Activated CD4-positive, alpha-beta memory T cell treated with anti-CD3 and anti-CD28 coated beads for 36 hours (primary cell): ENCODE measurements at regions of chr2 and their contacts with region 1.

Region 1: GRCh38 chr2:10832203-10832936 is 19.8 kb upstream of the PDIA6 start:
- DNase-seq: peak; percentile 89
- H3K4me3 Mint-ChIP-seq: no peak overlapping the region
- H3K27ac Mint-ChIP-seq: no peak overlapping the region
- H3K4me1 Mint-ChIP-seq: peaks cover 3% of the 10 kb centered on the region
- H3K27me3 Mint-ChIP-seq: peaks cover 12% of the 10 kb centered on the region

Region 2: DNA sequence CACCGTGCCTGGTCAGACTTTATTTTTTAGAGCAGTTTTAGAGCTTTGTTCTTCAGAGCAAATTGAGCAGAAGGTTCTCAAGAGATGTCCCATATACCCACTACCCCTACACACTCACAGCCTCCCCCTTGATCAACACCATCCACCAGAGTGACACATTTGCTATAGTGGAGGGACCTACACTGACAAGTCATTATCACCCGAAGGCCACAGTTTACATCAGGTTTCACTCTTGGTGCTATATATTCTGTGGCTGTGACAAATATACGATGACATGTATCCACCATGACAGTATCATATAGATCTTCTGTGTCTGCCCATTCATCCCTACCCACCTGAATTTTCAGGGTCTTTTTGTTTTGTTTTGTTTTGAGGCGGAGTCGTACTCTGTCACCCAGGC is 126.3 kb before region 1 on chr2:
- CTCF ChIA-PET with region 1: no interaction called
- POLR2A ChIA-PET with region 1: no interaction called
- intact Hi-C with region 1: no loop called
- DNase-seq: no peak
- H3K4me3 Mint-ChIP-seq: no peak overlapping the region
- H3K27ac Mint-ChIP-seq: no peak overlapping the region
- H3K4me1 Mint-ChIP-seq: no peaks in the 10 kb centered on the region
- H3K27me3 Mint-ChIP-seq: peaks cover 33% of the 10 kb centered on the region

Region 3: GRCh38 chr2:10812362-10813162 is 19.8 kb before region 1 on chr2 and contains the start of gene PDIA6:
- CTCF ChIA-PET with region 1: interaction called, 14 read pairs
- POLR2A ChIA-PET with region 1: no interaction called
- intact Hi-C with region 1: no loop called
- DNase-seq: peak; percentile 97
- H3K4me3 Mint-ChIP-seq: peak within 1 kb of the TSS; percentile 88
- H3K27ac Mint-ChIP-seq: peak within 1 kb of the TSS; percentile 90
- H3K4me1 Mint-ChIP-seq: peaks cover 34% of the 10 kb centered on the region
- H3K27me3 Mint-ChIP-seq: no peaks in the 10 kb centered on the region
- total RNA-seq, gene PDIA6: 176 to 181 TPM

Region 4: DNA sequence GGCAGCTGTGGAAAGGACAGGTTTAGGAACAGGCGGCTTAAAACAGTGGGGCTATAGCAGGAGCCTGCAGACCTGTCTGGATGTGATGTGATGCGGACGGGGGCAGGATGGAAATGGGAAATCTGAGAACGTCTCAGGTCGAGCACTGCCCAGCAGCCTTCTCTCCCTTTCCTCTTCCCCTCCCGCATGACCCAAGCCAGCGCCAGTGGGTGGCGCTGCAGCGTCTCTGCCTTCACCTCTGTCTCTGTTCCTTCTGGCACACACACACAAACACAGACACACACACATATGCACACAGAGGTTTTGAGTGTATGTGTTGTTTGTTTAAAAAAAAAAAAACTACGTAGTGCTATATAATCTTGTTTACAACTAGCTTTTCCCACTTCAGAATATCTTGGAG is 240.9 kb after region 1 on chr2:
- CTCF ChIA-PET with region 1: interaction called, 15 read pairs
- POLR2A ChIA-PET with region 1: no interaction called
- intact Hi-C with region 1: no loop called
- DNase-seq: peak; percentile 55
- H3K4me3 Mint-ChIP-seq: no peak overlapping the region
- H3K27ac Mint-ChIP-seq: no peak overlapping the region
- H3K4me1 Mint-ChIP-seq: peaks cover 17% of the 10 kb centered on the region
- H3K27me3 Mint-ChIP-seq: peaks cover 16% of the 10 kb centered on the region

Region 5: GRCh38 chr2:11465497-11466406 is 633.4 kb after region 1 on chr2 and contains the start of gene E2F6:
- CTCF ChIA-PET with region 1: interaction called, 4 read pairs
- POLR2A ChIA-PET with region 1: no interaction called
- intact Hi-C with region 1: loop called (anchors 10 kb)
- DNase-seq: peak; percentile 92
- H3K4me3 Mint-ChIP-seq: peak within 1 kb of the TSS; percentile 91
- H3K27ac Mint-ChIP-seq: peak within 1 kb of the TSS; percentile 83
- H3K4me1 Mint-ChIP-seq: peaks cover 36% of the 10 kb centered on the region
- H3K27me3 Mint-ChIP-seq: no peaks in the 10 kb centered on the region
- total RNA-seq, gene E2F6: 9.9 to 10.3 TPM